ENCODE measurements at regions of chr2 and their contacts with region 1.

Region 1: DNA sequence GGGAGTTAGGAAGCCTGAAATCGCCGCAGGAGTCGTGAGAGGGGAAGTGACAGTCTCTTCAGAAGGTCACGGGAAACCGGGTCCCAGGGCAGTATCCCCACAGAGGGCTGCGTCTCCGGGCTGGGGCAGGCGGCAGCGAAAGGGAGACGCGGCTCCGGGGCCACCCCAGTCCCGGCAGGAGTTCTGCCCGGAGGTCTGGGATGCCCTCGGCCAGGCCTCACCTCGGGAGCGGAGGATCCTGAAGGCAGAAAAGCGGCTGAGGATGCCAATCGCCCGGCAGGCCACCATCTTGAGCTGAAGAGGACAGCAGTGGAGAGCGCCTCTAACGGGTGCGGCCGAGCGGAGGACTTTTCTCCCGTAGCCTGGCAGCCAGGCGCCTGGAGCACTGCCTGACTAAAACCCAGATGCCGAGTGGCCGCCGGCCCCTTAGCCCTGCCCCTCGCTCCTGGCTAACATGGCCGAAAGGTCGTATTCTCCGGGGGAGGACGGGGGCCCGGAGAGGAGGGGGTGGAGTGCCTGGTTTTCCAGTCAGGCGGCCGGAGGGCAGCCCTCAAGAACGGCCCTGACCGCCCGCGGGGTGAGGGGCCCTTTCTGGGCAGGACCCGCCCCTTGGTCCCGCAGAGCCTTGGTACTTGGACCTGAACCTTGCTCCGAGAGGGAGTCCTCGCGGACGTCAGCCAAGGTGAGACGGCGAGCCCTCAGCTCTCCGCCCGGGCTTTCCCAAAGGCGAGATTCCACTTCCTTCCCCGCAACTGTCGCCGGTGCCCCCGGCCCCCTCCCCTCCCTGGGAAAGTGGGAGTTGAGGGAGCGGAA is at the starts of genes HADHA and HADHB:
- DNase-seq: peak; percentile 88
- ATAC-seq: peak; percentile 87
- H3K4me3 Mint-ChIP-seq: peak within 1 kb of the TSS; percentile 99
- H3K27ac Mint-ChIP-seq: peak within 1 kb of the TSS; percentile 100
- H3K4me1 Mint-ChIP-seq: peaks cover 50% of the 10 kb centered on the region
- H3K27me3 Mint-ChIP-seq: no peaks in the 10 kb centered on the region
- total RNA-seq, gene HADHA: 119 to 124 TPM
- total RNA-seq, gene HADHB: 59.1 to 63.5 TPM

Region 2: GRCh38 chr2:26122630-26123029 is 121.9 kb before region 1 on chr2:
- CTCF ChIA-PET with region 1: no interaction called
- POLR2A ChIA-PET with region 1: no interaction called
- DNase-seq: no peak
- ATAC-seq: no peak
- H3K4me3 Mint-ChIP-seq: no peak overlapping the region
- H3K27ac Mint-ChIP-seq: no peak overlapping the region
- H3K4me1 Mint-ChIP-seq: peaks cover 2% of the 10 kb centered on the region
- H3K27me3 Mint-ChIP-seq: no peaks in the 10 kb centered on the region

Region 3: DNA sequence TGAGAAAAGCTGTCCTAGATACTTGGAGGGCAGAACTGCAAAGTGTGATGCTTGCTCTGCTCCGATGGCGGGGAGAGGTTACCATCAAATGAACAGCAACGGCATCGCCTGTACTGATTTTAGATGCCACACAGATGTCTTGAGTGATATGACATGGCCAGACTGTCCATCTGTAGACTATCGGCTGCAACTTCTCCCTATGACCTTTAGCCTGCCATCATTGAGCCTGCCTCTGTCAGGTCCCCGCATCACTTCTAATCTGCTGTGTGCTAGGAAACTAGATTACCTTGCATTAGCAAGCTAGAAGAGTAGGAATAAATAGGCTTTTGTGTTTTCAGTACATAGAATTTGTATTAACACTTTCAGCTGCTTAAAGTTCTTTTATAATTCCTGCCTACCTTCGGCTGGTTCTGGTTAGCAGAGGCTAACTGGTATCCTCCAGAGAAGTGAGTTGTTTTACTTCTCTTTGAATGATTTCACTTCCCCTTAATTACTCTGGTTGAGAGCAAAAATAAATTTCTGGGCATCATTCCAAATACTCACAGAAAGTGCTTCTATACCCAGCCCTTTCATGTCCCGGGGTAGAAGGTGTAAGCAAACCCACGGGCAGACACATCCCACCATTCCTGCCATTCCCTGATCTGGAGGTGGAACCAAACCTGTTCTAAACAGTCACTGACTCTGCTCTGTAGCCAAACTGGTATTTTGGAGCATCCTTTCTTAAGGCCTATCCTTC is 47.7 kb before region 1 on chr2:
- CTCF ChIA-PET with region 1: no interaction called
- POLR2A ChIA-PET with region 1: no interaction called
- DNase-seq: no peak
- ATAC-seq: no peak
- H3K4me3 Mint-ChIP-seq: no peak overlapping the region
- H3K27ac Mint-ChIP-seq: no peak overlapping the region
- H3K4me1 Mint-ChIP-seq: no peaks in the 10 kb centered on the region
- H3K27me3 Mint-ChIP-seq: no peaks in the 10 kb centered on the region

Region 4: GRCh38 chr2:26299471-26300101 is 55.1 kb after region 1 on chr2:
- CTCF ChIA-PET with region 1: interaction called, 3 read pairs
- POLR2A ChIA-PET with region 1: interaction called, 13 read pairs
- DNase-seq: peak; percentile 42
- ATAC-seq: peak; percentile 50
- H3K4me3 Mint-ChIP-seq: no peak overlapping the region
- H3K27ac Mint-ChIP-seq: no peak overlapping the region
- H3K4me1 Mint-ChIP-seq: no peaks in the 10 kb centered on the region
- H3K27me3 Mint-ChIP-seq: no peaks in the 10 kb centered on the region

Region 5: DNA sequence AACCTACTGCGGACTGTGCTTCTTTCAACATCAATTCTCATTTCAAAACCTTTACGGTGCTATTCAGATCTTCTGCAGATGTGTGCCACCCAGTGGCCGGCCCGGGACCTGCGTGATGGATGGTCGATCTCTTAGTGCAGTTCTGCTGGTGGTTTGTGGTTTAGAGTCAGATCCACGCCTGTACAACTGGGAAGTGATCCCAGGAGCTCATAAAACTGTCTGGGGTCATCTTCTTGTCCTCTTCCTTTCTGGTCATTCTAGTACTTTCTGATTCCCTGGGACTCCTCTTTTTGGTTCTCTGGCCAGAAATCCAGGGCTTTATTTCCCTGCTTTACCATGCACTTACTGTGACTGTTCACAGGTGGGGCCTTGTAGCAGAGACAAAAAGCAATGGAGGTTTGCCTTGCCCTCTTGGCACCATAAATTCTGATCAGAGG is 85.6 kb after region 1 on chr2:
- CTCF ChIA-PET with region 1: interaction called, 32 read pairs
- POLR2A ChIA-PET with region 1: interaction called, 12 read pairs
- DNase-seq: peak; percentile 92
- ATAC-seq: peak; percentile 95
- H3K4me3 Mint-ChIP-seq: no peak overlapping the region
- H3K27ac Mint-ChIP-seq: no peak overlapping the region
- H3K4me1 Mint-ChIP-seq: peaks cover 40% of the 10 kb centered on the region
- H3K27me3 Mint-ChIP-seq: no peaks in the 10 kb centered on the region

Region 6: GRCh38 chr2:26345545-26346453 is 101.3 kb after region 1 on chr2 and contains the start of gene SELENOI:
- CTCF ChIA-PET with region 1: interaction called, 19 read pairs
- POLR2A ChIA-PET with region 1: interaction called, 26 read pairs
- DNase-seq: peak; percentile 99
- ATAC-seq: peak; percentile 95
- H3K4me3 Mint-ChIP-seq: peak within 1 kb of the TSS; percentile 92
- H3K27ac Mint-ChIP-seq: peak within 1 kb of the TSS; percentile 95
- H3K4me1 Mint-ChIP-seq: peaks cover 43% of the 10 kb centered on the region
- H3K27me3 Mint-ChIP-seq: no peaks in the 10 kb centered on the region
- total RNA-seq, gene SELENOI: 36.8 to 37.6 TPM